ENCODE measurements at regions of chr7 and their contacts with region 1.

Region 1: DNA sequence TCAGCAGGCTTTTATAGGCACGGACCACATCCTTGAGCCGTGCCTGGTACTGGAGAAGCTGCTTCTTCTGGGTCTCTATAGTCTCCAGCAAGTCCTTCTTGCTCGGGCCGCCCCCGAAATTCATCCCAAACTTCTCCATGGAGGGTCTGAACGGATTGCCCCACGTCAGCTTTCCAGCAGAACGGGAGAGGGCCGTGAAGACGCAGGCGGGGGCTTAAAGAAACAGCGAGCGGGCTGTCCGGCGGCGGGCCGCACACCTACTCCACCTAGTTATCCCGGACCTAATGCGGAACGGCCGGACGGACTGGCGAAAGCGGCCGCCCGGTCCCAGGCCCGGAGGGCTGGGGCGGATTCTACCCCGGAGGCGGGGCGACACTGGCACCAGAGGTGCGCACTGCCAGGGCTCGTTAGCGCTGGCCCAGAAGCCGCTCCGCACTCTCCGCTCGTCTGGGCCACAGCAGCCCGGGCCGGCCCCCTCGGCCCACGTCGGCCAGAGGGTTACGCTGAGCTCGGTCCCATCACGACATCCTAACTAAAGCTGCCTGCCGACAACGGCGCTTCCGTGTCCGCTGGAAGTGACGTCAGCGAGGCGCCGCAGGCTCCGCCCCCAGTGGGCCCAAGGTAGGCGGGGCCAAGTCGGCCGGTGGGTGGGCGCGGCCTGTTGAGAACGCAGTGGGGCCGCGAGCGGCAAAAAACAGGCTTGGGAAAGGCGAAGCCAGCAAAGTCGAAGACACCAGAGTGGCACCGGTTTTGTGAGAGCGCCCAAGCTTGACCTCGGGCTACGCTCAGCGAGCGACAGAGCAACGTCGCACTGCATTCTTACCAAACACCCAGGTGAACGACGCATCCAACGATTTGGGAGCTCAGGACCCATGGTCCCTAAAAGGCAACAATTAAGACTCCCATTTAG is at the start of gene GCC1:
- DNase-seq: peak; percentile 94
- H3K4me3 ChIP-seq: peak within 1 kb of the TSS; percentile 87 to 95 (median 94)
- H3K27ac ChIP-seq: peak within 1 kb of the TSS; percentile 60
- H3K4me1 ChIP-seq: peaks cover 37% of the 10 kb centered on the region
- H3K27me3 ChIP-seq: no peaks in the 10 kb centered on the region
- CTCF ChIP-seq: no peak
- POLR2A ChIP-seq: peak; percentile 91
- total RNA-seq, gene GCC1: 14.5 and 15.5 TPM in 2 replicates

Region 2: GRCh38 chr7:127253281-127254162 is 331.8 kb before region 1 on chr7:
- CTCF ChIA-PET with region 1: no interaction called
- POLR2A ChIA-PET with region 1: no interaction called
- dilution Hi-C with region 1: no loop called
- intact Hi-C with region 1: loop called (anchors 5 kb)
- DNase-seq: peak; percentile 66
- H3K4me3 ChIP-seq: peak overlapping the region; percentile 27 to 59 (median 41)
- H3K27ac ChIP-seq: no peak overlapping the region
- H3K4me1 ChIP-seq: peaks cover 9% of the 10 kb centered on the region
- H3K27me3 ChIP-seq: peaks cover 36 to 52% of the 10 kb centered on the region in 2 experiments
- CTCF ChIP-seq: peak; percentile 70 to 89
- POLR2A ChIP-seq: no peak

Region 3: DNA sequence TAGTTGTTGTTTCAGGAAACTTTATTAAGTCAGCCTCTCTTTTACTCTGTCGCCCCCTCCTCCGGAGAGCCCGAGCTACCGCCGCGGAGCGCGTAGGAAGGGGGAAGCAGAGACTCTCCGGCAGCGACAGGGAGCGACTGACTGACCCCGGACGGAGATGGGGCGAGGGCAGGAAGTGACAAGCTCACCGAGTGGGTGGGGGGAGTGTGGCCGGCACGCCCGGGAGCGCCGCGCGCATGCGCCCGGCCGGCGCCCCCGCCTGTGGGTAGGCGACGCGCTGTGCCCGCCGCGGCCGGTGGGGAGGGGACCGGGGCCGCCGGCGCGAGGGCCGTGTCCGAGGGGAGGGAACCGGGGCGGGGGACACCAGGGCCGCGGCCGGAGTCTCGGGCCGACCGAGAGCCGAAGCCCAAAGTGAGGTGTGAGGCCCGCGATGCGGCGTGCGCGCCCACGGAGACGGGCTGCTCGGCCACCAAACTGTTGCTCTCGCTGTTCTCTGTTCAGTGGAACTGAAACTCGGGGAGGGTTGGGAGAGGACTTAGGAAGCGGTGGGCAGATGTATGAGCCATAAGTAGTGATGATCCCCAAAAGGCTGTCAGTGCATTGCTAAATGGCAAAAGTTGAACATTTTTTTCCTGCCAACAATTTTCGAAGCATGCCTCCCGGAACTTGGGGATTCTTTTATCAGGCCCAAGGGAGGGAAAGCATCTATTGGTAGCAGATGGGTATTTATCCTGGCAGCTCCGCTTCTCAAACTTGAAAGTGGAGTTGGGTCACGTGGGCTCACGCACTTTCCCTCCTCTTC is 192.5 kb before region 1 on chr7 and contains the start of gene ZNF800:
- CTCF ChIA-PET with region 1: interaction called, 3 read pairs
- POLR2A ChIA-PET with region 1: no interaction called
- dilution Hi-C with region 1: no loop called
- intact Hi-C with region 1: loop called (anchors 2 kb)
- DNase-seq: peak; percentile 85
- H3K4me3 ChIP-seq: peak within 1 kb of the TSS; percentile 88 to 97 (median 88)
- H3K27ac ChIP-seq: peak within 1 kb of the TSS; percentile 90
- H3K4me1 ChIP-seq: peaks cover 20% of the 10 kb centered on the region
- H3K27me3 ChIP-seq: peaks cover 7 to 31% of the 10 kb centered on the region in 2 experiments
- CTCF ChIP-seq: no peak
- POLR2A ChIP-seq: peak; percentile 72
- total RNA-seq, gene ZNF800: 31.5 and 35.4 TPM in 2 replicates

Region 4: DNA sequence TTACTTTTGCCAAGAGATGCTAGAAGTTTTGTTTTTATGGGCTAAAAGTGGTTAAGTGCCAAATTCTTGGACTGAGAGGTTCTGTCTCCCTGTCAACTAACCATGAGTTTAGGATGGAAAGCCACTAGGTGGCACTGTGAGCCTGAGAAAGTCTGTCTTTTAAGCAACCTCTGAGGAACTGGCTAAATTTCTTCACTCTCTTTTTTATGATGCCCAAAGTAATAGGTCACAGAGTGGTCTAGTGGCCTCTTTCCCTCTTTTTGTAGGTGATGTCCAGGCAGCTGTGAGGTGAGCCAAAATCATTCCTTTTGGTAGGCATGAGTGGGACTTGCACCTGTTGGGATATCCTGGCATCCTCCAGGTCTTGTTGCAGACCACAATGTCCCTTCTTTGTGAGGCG is 123.5 kb after region 1 on chr7:
- CTCF ChIA-PET with region 1: interaction called, 9 read pairs
- POLR2A ChIA-PET with region 1: no interaction called
- dilution Hi-C with region 1: no loop called
- intact Hi-C with region 1: loop called (anchors 5 kb)
- DNase-seq: peak; percentile 81
- H3K4me3 ChIP-seq: no peak overlapping the region
- H3K27ac ChIP-seq: no peak overlapping the region
- H3K4me1 ChIP-seq: peaks cover 5% of the 10 kb centered on the region
- H3K27me3 ChIP-seq: no peaks in the 10 kb centered on the region
- CTCF ChIP-seq: peak; percentile 62 to 63
- POLR2A ChIP-seq: no peak

Region 5: GRCh38 chr7:128135515-128136214 is 550.4 kb after region 1 on chr7:
- CTCF ChIA-PET with region 1: interaction called, 3 read pairs
- POLR2A ChIA-PET with region 1: no interaction called
- dilution Hi-C with region 1: no loop called
- intact Hi-C with region 1: loop called (anchors 5 kb)
- DNase-seq: peak; percentile 64
- H3K4me3 ChIP-seq: peak overlapping the region; percentile 34 to 62 (median 58)
- H3K27ac ChIP-seq: no peak overlapping the region
- H3K4me1 ChIP-seq: peaks cover 37% of the 10 kb centered on the region
- H3K27me3 ChIP-seq: peaks cover 17 to 34% of the 10 kb centered on the region in 2 experiments
- CTCF ChIP-seq: peak; percentile 75 to 93
- POLR2A ChIP-seq: no peak

Measured in endothelial cell of umbilical vein (primary cell).